CD4-positive, alpha-beta T cell (primary cell): ENCODE measurements at regions of chr11 and their contacts with region 1.

Region 1: DNA sequence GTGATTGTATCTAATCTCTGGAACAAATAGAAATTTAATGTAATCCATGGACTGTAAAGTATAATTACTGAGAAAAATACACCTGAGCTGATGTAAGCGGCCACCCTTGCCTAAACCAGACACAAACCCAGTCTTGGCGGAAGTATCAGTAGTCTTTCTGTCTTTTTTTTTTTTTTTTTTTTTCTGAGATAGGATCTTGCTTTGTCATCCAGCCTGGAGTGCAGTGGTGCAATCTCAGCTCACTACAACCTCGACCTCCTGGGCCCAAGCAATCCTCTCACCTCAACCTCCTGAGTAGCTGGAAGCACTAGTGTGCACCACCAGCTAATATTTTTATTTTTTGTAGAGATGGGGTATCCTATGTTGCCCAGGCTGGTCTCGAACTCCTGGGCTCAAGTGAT is 5.5 kb upstream of the CXCR5 start:
- DNase-seq: peak in 7 of 14 experiments; percentile 35 to 79 (median 50)
- ATAC-seq: peak; percentile 28
- H3K4me3 ChIP-seq: no peak overlapping the region
- H3K4me3 Mint-ChIP-seq: peak overlapping the region; percentile 84
- H3K27ac ChIP-seq: peak overlapping the region; percentile 83 to 90
- H3K27ac Mint-ChIP-seq: peak overlapping the region; percentile 95
- H3K4me1 ChIP-seq: peaks cover 95% of the 10 kb centered on the region
- H3K4me1 Mint-ChIP-seq: peaks cover 92% of the 10 kb centered on the region
- H3K27me3 ChIP-seq: no peaks in the 10 kb centered on the region
- H3K27me3 Mint-ChIP-seq: no peaks in the 10 kb centered on the region
- CTCF ChIP-seq: no peak

Region 2: DNA sequence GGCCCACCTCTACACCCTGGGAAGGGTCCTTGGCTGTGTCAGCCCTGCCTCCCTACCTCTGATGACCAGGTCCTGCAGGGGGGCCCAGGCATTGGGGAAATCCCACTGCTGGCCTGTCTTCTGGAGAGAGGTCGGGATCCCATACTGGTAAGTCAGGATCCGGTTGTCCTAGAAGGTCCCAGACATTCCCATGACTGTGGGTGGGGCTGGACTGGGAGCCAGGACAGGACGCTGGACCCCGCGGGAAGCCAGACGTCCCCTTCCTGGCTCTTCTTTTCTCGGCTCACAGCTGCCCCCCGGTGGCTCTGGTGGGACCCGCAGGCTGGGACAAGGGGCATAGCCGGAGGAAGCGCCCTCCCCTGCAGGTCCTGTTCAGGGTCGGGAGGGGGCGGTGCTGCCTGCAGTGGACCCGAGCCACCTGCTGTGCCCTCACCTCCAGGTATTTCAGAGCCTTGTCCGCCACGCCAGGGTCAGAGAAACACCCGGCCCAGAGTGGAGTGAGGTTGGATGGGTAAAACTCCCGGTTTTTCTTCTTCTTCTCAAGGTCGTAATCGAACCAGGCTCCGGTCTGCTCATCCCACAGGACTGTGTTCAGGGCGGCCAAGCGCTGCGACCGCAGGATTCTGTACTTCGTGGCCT is 218.7 kb before region 1 on chr11:
- CTCF ChIA-PET with region 1: no interaction called
- POLR2A ChIA-PET with region 1: no interaction called
- intact Hi-C with region 1: no loop called
- DNase-seq: peak; percentile 80 to 91 (median 88)
- ATAC-seq: peak; percentile 100
- H3K4me3 ChIP-seq: no peak overlapping the region
- H3K4me3 Mint-ChIP-seq: no peak overlapping the region
- H3K27ac ChIP-seq: no peak overlapping the region
- H3K27ac Mint-ChIP-seq: no peak overlapping the region
- H3K4me1 ChIP-seq: peaks cover 10% of the 10 kb centered on the region
- H3K4me1 Mint-ChIP-seq: no peaks in the 10 kb centered on the region
- H3K27me3 ChIP-seq: no peaks in the 10 kb centered on the region
- H3K27me3 Mint-ChIP-seq: no peaks in the 10 kb centered on the region
- CTCF ChIP-seq: peak; percentile 94

Region 3: GRCh38 chr11:118699506-118700220 is 178.5 kb before region 1 on chr11:
- CTCF ChIA-PET with region 1: no interaction called
- POLR2A ChIA-PET with region 1: interaction called, 13 read pairs
- intact Hi-C with region 1: loop called in 1 of 2 experiments (anchors 5 kb)
- DNase-seq: peak; percentile 48 to 95 (median 60)
- ATAC-seq: peak; percentile 97
- H3K4me3 ChIP-seq: no peak overlapping the region
- H3K4me3 Mint-ChIP-seq: peak overlapping the region; percentile 68
- H3K27ac ChIP-seq: peak overlapping the region; percentile 48 to 65
- H3K27ac Mint-ChIP-seq: peak overlapping the region; percentile 97
- H3K4me1 ChIP-seq: peaks cover 71% of the 10 kb centered on the region
- H3K4me1 Mint-ChIP-seq: peaks cover 56% of the 10 kb centered on the region
- H3K27me3 ChIP-seq: no peaks in the 10 kb centered on the region
- H3K27me3 Mint-ChIP-seq: no peaks in the 10 kb centered on the region
- CTCF ChIP-seq: no peak

Region 4: DNA sequence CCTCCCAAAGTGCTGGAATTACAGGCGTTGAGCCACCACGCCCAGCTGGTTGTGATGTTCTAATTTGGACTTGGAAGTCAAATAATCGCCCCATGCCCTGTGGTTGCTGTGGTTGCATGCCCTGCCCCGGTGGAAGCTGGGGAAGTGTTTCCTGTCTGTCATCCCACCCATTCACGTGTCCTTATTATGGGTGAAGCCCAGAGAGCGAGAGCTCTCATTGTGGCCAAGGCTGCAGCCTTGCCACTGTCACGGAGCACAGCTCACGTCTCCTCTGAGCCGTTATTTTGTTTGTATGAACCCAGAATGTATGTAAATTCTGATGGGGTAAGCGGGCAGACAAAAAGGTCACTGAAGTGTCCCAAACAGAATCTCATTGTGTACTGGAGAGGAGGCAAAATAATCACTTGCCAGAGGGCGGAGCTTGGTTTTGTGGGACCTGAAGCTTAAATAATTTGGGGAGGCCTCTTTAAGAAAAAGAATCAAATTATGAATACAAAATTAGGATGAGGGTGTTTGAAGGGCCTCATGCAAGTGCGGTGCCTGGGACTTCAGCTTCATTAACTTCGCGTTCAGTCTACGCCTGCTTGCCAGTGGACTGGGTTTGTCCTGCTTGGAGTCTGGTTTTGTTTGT is 172.9 kb before region 1 on chr11:
- CTCF ChIA-PET with region 1: no interaction called
- POLR2A ChIA-PET with region 1: interaction called, 12 read pairs
- intact Hi-C with region 1: no loop called
- DNase-seq: peak in 13 of 14 experiments; percentile 26 to 87 (median 45)
- ATAC-seq: peak; percentile 74
- H3K4me3 ChIP-seq: no peak overlapping the region
- H3K4me3 Mint-ChIP-seq: peak overlapping the region; percentile 84
- H3K27ac ChIP-seq: peak overlapping the region; percentile 14 to 60
- H3K27ac Mint-ChIP-seq: peak overlapping the region; percentile 92
- H3K4me1 ChIP-seq: peaks cover 42% of the 10 kb centered on the region
- H3K4me1 Mint-ChIP-seq: peaks cover 42% of the 10 kb centered on the region
- H3K27me3 ChIP-seq: no peaks in the 10 kb centered on the region
- H3K27me3 Mint-ChIP-seq: no peaks in the 10 kb centered on the region
- CTCF ChIP-seq: no peak

Region 5: GRCh38 chr11:118757876-118758399 is 120.2 kb before region 1 on chr11:
- CTCF ChIA-PET with region 1: no interaction called
- POLR2A ChIA-PET with region 1: no interaction called
- intact Hi-C with region 1: no loop called
- DNase-seq: no peak
- ATAC-seq: no peak
- H3K4me3 ChIP-seq: no peak overlapping the region
- H3K4me3 Mint-ChIP-seq: no peak overlapping the region
- H3K27ac ChIP-seq: no peak overlapping the region
- H3K27ac Mint-ChIP-seq: peak overlapping the region; percentile 54
- H3K4me1 ChIP-seq: no peaks in the 10 kb centered on the region
- H3K4me1 Mint-ChIP-seq: peaks cover 12% of the 10 kb centered on the region
- H3K27me3 ChIP-seq: no peaks in the 10 kb centered on the region
- H3K27me3 Mint-ChIP-seq: no peaks in the 10 kb centered on the region
- CTCF ChIP-seq: no peak

Region 6: GRCh38 chr11:118856314-118856713 is 21.8 kb before region 1 on chr11:
- CTCF ChIA-PET with region 1: no interaction called
- POLR2A ChIA-PET with region 1: interaction called, 12 read pairs
- intact Hi-C with region 1: no loop called
- DNase-seq: no peak
- ATAC-seq: no peak
- H3K4me3 ChIP-seq: no peak overlapping the region
- H3K4me3 Mint-ChIP-seq: no peak overlapping the region
- H3K27ac ChIP-seq: no peak overlapping the region
- H3K27ac Mint-ChIP-seq: no peak overlapping the region
- H3K4me1 ChIP-seq: peaks cover 3% of the 10 kb centered on the region
- H3K4me1 Mint-ChIP-seq: peaks cover 19% of the 10 kb centered on the region
- H3K27me3 ChIP-seq: no peaks in the 10 kb centered on the region
- H3K27me3 Mint-ChIP-seq: no peaks in the 10 kb centered on the region
- CTCF ChIP-seq: no peak

Region 7: DNA sequence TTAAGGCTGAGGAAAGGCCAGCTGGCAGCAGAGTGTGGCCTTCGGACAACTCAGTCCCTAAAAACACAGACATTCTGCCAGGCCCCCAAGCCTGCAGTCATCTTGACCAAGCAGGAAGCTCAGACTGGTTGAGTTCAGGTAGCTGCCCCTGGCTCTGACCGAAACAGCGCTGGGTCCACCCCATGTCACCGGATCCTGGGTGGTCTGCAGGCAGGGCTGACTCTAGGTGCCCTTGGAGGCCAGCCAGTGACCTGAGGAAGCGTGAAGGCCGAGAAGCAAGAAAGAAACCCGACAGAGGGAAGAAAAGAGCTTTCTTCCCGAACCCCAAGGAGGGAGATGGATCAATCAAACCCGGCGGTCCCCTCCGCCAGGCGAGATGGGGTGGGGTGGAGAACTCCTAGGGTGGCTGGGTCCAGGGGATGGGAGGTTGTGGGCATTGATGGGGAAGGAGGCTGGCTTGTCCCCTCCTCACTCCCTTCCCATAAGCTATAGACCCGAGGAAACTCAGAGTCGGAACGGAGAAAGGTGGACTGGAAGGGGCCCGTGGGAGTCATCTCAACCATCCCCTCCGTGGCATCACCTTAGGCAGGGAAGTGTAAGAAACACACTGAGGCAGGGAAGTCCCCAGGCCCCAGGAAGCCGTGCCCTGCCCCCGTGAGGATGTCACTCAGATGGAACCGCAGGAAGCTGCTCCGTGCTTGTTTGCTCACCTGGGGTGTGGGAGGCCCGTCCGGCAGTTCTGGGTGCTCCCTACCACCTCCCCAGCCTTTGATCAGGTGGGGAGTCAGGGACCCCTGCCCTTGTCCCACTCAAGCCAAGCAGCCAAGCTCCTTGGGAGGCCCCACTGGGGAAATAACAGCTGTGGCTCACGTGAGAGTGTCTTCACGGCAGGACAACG is 17.2 kb after region 1 on chr11:
- CTCF ChIA-PET with region 1: interaction called, 7 read pairs
- POLR2A ChIA-PET with region 1: interaction called, 21 read pairs
- intact Hi-C with region 1: loop called in 1 of 2 experiments (anchors 1 kb)
- DNase-seq: peak; percentile 59 to 91 (median 76)
- ATAC-seq: peak; percentile 75
- H3K4me3 ChIP-seq: peak overlapping the region; percentile 18
- H3K4me3 Mint-ChIP-seq: peak overlapping the region; percentile 70
- H3K27ac ChIP-seq: peak overlapping the region; percentile 77 to 89
- H3K27ac Mint-ChIP-seq: peak overlapping the region; percentile 97
- H3K4me1 ChIP-seq: peaks cover 94% of the 10 kb centered on the region
- H3K4me1 Mint-ChIP-seq: peaks cover 76% of the 10 kb centered on the region
- H3K27me3 ChIP-seq: no peaks in the 10 kb centered on the region
- H3K27me3 Mint-ChIP-seq: no peaks in the 10 kb centered on the region
- CTCF ChIP-seq: no peak

Region 8: GRCh38 chr11:118907051-118908042 is 29.2 kb after region 1 on chr11:
- CTCF ChIA-PET with region 1: interaction called, 4 read pairs
- POLR2A ChIA-PET with region 1: interaction called, 35 read pairs
- intact Hi-C with region 1: no loop called
- DNase-seq: peak; percentile 78 to 91 (median 86)
- ATAC-seq: peak; percentile 41
- H3K4me3 ChIP-seq: no peak overlapping the region
- H3K4me3 Mint-ChIP-seq: peak overlapping the region; percentile 77
- H3K27ac ChIP-seq: peak overlapping the region; percentile 22 to 49
- H3K27ac Mint-ChIP-seq: peak overlapping the region; percentile 100
- H3K4me1 ChIP-seq: peaks cover 60% of the 10 kb centered on the region
- H3K4me1 Mint-ChIP-seq: peaks cover 48% of the 10 kb centered on the region
- H3K27me3 ChIP-seq: no peaks in the 10 kb centered on the region
- H3K27me3 Mint-ChIP-seq: no peaks in the 10 kb centered on the region
- CTCF ChIP-seq: peak; percentile 88

Region 9: DNA sequence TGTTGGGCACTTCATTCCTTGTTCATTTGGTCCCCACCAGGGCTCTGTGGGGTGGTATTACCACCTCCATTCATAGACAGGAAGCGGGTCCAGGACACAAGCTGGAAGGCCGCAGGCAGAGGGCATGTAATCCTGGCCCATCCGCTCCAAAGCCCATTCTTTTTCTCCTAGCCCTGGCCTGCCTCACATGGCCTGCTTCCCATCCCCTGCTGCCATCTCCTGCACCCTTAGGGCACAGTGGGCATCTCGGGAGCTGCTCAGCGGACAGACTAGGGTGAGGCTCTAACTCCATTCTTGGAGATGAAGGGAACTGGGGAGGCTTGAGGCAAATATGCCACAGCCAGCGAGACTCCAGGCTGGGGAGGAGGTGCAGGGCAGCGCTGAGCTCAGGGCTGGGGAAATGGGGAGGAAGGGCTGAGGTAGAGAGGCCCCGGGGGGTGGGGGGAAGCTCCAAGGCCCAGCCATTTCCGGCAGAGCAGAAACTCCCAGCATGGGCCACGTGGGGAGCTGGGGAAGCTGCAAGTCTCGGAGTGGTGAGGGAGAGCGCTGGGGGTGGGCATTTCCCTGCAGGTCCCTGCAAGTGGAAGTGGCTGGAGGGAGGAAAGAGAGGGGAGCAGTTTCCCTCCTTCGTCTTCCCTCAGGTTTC is 61.9 kb after region 1 on chr11:
- CTCF ChIA-PET with region 1: no interaction called
- POLR2A ChIA-PET with region 1: no interaction called
- intact Hi-C with region 1: no loop called
- DNase-seq: peak in 11 of 14 experiments; percentile 21 to 78 (median 61)
- ATAC-seq: peak; percentile 95
- H3K4me3 ChIP-seq: no peak overlapping the region
- H3K4me3 Mint-ChIP-seq: peak overlapping the region; percentile 60
- H3K27ac ChIP-seq: no peak overlapping the region
- H3K27ac Mint-ChIP-seq: peak overlapping the region; percentile 44
- H3K4me1 ChIP-seq: peaks cover 33% of the 10 kb centered on the region
- H3K4me1 Mint-ChIP-seq: peaks cover 55% of the 10 kb centered on the region
- H3K27me3 ChIP-seq: no peaks in the 10 kb centered on the region
- H3K27me3 Mint-ChIP-seq: no peaks in the 10 kb centered on the region
- CTCF ChIP-seq: no peak